Endothelial cell of umbilical vein (primary cell): ENCODE measurements at regions of chr15 and their contacts with region 1.

Region 1: GRCh38 chr15:67109141-67110034 is 44.0 kb downstream of the SMAD3 start:
- DNase-seq: peak; percentile 94
- H3K4me3 ChIP-seq: no peak overlapping the region
- H3K27ac ChIP-seq: peak overlapping the region; percentile 95
- H3K4me1 ChIP-seq: peaks cover 63% of the 10 kb centered on the region
- H3K27me3 ChIP-seq: no peaks in the 10 kb centered on the region
- CTCF ChIP-seq: no peak
- POLR2A ChIP-seq: no peak

Region 2: GRCh38 chr15:67024314-67024997 is 84.9 kb before region 1 on chr15:
- CTCF ChIA-PET with region 1: interaction called, 5 read pairs
- POLR2A ChIA-PET with region 1: no interaction called
- dilution Hi-C with region 1: no loop called
- intact Hi-C with region 1: loop called (anchors 2 kb)
- DNase-seq: peak; percentile 92
- H3K4me3 ChIP-seq: no peak overlapping the region
- H3K27ac ChIP-seq: peak overlapping the region; percentile 77
- H3K4me1 ChIP-seq: peaks cover 38% of the 10 kb centered on the region
- H3K27me3 ChIP-seq: no peaks in the 10 kb centered on the region
- CTCF ChIP-seq: no peak
- POLR2A ChIP-seq: no peak

Region 3: DNA sequence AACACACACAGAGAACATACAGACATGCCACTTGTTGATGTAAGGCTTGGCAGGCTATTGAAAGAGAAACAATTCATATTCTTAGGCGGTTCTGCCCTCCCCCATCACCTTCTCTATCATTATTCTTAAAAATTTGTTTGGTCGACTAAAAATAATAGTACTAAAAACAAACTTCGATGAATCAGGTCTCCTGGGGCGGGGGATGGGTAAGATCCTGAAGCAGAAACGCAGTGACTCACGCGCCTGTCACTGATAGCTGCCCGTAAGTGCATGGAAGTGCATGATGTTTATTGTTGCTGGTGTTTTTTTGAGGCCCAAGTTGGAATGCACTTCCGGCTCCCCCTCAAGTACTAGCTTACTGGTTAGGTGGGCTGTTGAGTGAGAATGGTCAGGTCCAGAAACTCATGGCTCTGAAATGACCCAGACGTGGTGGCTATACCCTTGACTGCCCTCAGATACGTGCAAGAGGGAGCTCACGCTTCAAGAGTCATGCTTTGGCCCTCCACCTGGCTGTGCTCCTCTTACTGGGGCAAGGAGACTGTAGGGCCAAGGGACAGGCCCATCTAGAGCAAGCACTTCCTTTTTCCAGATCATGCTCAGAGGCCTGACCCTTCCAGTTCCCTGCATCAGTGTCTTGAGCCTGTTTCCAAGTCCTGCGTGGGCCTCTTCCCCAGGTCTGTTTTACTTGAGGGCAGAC is 33.1 kb before region 1 on chr15:
- CTCF ChIA-PET with region 1: interaction called, 4 read pairs
- POLR2A ChIA-PET with region 1: no interaction called
- dilution Hi-C with region 1: no loop called
- intact Hi-C with region 1: loop called (anchors 1 kb)
- DNase-seq: peak; percentile 95
- H3K4me3 ChIP-seq: no peak overlapping the region
- H3K27ac ChIP-seq: peak overlapping the region; percentile 76
- H3K4me1 ChIP-seq: peaks cover 72% of the 10 kb centered on the region
- H3K27me3 ChIP-seq: no peaks in the 10 kb centered on the region
- CTCF ChIP-seq: no peak
- POLR2A ChIP-seq: no peak

Region 4: GRCh38 chr15:67120839-67121643 is 11.7 kb after region 1 on chr15:
- CTCF ChIA-PET with region 1: interaction called, 11 read pairs
- POLR2A ChIA-PET with region 1: interaction called, 3 read pairs
- dilution Hi-C with region 1: no loop called
- intact Hi-C with region 1: loop called (anchors 1 kb)
- DNase-seq: peak; percentile 98
- H3K4me3 ChIP-seq: no peak overlapping the region
- H3K27ac ChIP-seq: peak overlapping the region; percentile 92
- H3K4me1 ChIP-seq: peaks cover 82% of the 10 kb centered on the region
- H3K27me3 ChIP-seq: no peaks in the 10 kb centered on the region
- CTCF ChIP-seq: no peak
- POLR2A ChIP-seq: no peak

Region 5: GRCh38 chr15:67175643-67176071 is 66.3 kb after region 1 on chr15:
- CTCF ChIA-PET with region 1: interaction called, 12 read pairs
- POLR2A ChIA-PET with region 1: interaction called, 7 read pairs
- dilution Hi-C with region 1: no loop called
- intact Hi-C with region 1: loop called (anchors 1 kb)
- DNase-seq: peak; percentile 54
- H3K4me3 ChIP-seq: no peak overlapping the region
- H3K27ac ChIP-seq: peak overlapping the region; percentile 87
- H3K4me1 ChIP-seq: peaks cover 56% of the 10 kb centered on the region
- H3K27me3 ChIP-seq: no peaks in the 10 kb centered on the region
- CTCF ChIP-seq: no peak
- POLR2A ChIP-seq: no peak